CD14-positive monocyte (primary cell): ENCODE measurements at regions of chr7 and their contacts with region 1.

Region 1: DNA sequence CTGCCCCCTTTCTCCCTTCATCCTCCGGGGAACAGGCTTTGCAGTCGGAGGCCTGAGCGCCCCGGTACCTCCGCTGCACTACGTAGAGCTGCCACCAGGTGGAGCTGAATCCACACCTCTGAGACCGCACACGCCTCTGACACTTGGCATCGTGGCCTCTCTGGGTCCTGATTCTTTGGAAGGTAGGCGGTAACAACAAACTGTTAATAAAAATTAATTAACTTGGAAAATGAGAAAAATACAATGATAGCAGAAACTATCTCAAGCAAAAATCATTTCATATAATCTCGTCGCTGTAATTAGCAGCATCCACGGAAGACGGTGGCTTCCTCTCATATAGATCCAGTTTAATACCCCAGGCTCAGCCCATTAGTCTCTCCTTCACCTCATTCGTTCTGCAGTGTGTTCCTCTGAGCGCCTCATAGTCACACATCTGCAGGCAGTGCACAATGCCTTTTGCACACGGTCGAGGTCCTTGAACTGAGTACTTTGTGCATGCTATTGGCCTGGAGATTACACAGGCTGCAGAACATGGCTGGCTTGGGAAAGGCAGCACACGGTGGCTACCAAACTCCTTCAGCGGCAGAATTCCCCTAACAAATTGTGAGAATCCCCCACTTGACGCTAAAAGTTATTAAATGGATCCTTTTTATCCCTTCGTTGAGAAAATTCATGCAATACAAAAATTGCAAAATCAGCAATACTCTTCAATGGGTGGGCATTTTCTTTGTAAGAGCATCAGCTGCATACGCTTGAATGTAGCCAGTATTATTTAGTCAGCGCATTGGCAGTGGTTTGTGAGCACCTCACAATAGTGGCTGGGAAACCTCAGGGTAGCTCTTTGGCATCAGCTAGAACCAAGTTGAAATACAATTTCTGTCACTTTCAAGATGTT is 18.7 kb downstream of the OR9A2 start:
- DNase-seq: peak; percentile 67 to 73 (median 73)
- H3K4me3 ChIP-seq: no peak overlapping the region
- H3K4me3 Mint-ChIP-seq: no peak overlapping the region
- H3K27ac ChIP-seq: no peak overlapping the region
- H3K27ac Mint-ChIP-seq: peak overlapping the region in 1 of 7 donors; percentile 34
- H3K4me1 ChIP-seq: peaks cover 0 to 5% of the 10 kb centered on the region in 2 donors
- H3K4me1 Mint-ChIP-seq: peaks cover 9% of the 10 kb centered on the region
- H3K27me3 ChIP-seq: no peaks in the 10 kb centered on the region
- H3K27me3 Mint-ChIP-seq: peaks cover 3 to 7% (median 5%) of the 10 kb centered on the region in 3 donors
- CTCF ChIP-seq: peak; percentile 93

Region 2: GRCh38 chr7:142853739-142854371 is 154.4 kb before region 1 on chr7:
- intact Hi-C with region 1: loop called (anchors 5 to 10 kb)
- DNase-seq: peak; percentile 77 to 81 (median 78)
- H3K4me3 ChIP-seq: peak overlapping the region; percentile 77 to 96 (median 87)
- H3K4me3 Mint-ChIP-seq: peak overlapping the region; percentile 95 to 97
- H3K27ac ChIP-seq: peak overlapping the region; percentile 82 to 84
- H3K27ac Mint-ChIP-seq: peak overlapping the region; percentile 92 to 97 (median 94)
- H3K4me1 ChIP-seq: peaks cover 19 to 31% of the 10 kb centered on the region in 2 donors
- H3K4me1 Mint-ChIP-seq: peaks cover 26% of the 10 kb centered on the region
- H3K27me3 ChIP-seq: no peaks in the 10 kb centered on the region
- H3K27me3 Mint-ChIP-seq: peaks cover 0 to 3% (median 0%) of the 10 kb centered on the region in 3 donors
- CTCF ChIP-seq: peak; percentile 89

Region 3: GRCh38 chr7:142880876-142881505 is 127.3 kb before region 1 on chr7:
- intact Hi-C with region 1: loop called in 1 of 2 experiments (anchors 10 kb)
- DNase-seq: peak; percentile 16 to 44 (median 44)
- H3K4me3 ChIP-seq: no peak overlapping the region
- H3K4me3 Mint-ChIP-seq: no peak overlapping the region
- H3K27ac ChIP-seq: no peak overlapping the region
- H3K27ac Mint-ChIP-seq: no peak overlapping the region
- H3K4me1 ChIP-seq: no peaks in the 10 kb centered on the region
- H3K4me1 Mint-ChIP-seq: no peaks in the 10 kb centered on the region
- H3K27me3 ChIP-seq: no peaks in the 10 kb centered on the region
- H3K27me3 Mint-ChIP-seq: peaks cover 2 to 6% (median 5%) of the 10 kb centered on the region in 3 donors
- CTCF ChIP-seq: peak; percentile 90

Region 4: DNA sequence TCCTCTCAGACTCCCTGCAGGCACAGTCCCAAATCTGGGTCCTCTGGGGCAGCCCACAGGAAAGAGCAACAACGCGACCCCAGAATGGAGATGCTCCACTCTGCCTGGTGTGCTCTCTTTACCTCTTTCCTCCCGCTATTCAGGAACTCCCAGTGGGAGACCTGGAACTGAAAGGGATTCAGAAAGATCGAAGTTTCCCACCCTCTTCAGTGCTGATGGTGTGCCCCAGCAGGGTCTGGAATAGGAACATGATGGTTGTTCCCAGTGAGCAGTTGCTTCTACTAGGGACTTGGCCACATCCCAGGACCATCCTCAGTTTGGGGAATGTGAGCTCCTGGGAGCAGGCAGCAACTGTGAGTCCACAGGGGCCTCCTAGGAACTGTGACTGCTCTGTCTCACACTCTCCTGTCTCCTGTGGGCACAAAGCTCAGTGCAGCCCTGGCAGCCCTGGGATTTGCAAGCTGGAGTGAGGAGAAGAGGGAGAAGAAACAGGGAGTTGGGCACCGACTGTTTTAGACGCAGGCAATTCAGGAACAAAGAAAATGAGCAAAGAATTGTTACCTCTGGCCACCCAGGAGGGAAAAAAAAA is 61.8 kb after region 1 on chr7:
- intact Hi-C with region 1: no loop called
- DNase-seq: no peak
- H3K4me3 ChIP-seq: no peak overlapping the region
- H3K4me3 Mint-ChIP-seq: no peak overlapping the region
- H3K27ac ChIP-seq: no peak overlapping the region
- H3K27ac Mint-ChIP-seq: no peak overlapping the region
- H3K4me1 ChIP-seq: no peaks in the 10 kb centered on the region
- H3K4me1 Mint-ChIP-seq: no peaks in the 10 kb centered on the region
- H3K27me3 ChIP-seq: no peaks in the 10 kb centered on the region
- H3K27me3 Mint-ChIP-seq: peaks cover 2 to 3% (median 2%) of the 10 kb centered on the region in 3 donors
- CTCF ChIP-seq: no peak

Region 5: DNA sequence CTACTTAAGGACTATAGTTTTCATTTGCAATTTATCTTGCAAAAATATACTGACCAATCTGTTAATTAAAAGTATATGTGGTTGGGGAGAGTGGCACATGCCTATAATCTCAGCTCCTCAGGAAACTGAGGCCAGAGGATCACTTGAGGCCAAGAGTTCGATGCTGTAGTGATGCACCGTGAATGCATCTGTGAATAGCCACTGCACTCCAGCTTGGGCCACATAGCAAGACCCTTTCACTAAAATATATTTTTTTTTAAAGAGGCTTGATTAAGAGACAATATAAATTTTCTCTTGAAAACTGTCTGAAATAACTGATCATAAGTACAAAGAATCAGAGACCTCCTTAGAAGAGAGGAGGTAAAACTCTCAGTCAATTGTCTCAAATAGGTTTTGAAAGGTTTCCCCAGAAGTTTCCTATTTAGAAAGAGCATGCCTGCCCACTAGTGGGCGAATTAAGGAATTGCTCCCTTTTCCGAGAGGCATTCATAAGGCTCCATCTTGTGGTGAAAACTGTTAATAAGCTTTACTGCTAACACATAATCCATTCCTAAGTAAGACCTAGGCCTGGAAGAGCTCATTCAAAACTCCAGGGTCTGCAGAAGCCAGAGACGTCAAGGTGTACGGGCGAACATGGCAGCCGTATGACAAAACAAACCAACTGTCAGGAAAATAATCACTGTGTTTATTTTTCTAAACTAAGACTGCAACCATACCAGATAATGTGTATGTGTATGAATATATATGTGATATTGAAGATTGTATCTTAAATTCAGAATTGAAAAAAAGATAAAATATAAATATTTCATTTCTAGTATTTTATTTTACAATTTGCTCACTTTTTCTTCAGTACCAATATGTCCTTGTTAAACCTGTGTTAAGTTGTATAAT is 206.8 kb after region 1 on chr7:
- intact Hi-C with region 1: loop called (anchors 2 kb)
- DNase-seq: peak; percentile 77 to 93 (median 81)
- H3K4me3 ChIP-seq: no peak overlapping the region
- H3K4me3 Mint-ChIP-seq: no peak overlapping the region
- H3K27ac ChIP-seq: no peak overlapping the region
- H3K27ac Mint-ChIP-seq: no peak overlapping the region
- H3K4me1 ChIP-seq: peaks cover under 1 to 2% of the 10 kb centered on the region in 2 donors
- H3K4me1 Mint-ChIP-seq: peaks cover 19% of the 10 kb centered on the region
- H3K27me3 ChIP-seq: no peaks in the 10 kb centered on the region
- H3K27me3 Mint-ChIP-seq: peaks cover 0 to 3% (median 2%) of the 10 kb centered on the region in 3 donors
- CTCF ChIP-seq: peak; percentile 100

Region 6: DNA sequence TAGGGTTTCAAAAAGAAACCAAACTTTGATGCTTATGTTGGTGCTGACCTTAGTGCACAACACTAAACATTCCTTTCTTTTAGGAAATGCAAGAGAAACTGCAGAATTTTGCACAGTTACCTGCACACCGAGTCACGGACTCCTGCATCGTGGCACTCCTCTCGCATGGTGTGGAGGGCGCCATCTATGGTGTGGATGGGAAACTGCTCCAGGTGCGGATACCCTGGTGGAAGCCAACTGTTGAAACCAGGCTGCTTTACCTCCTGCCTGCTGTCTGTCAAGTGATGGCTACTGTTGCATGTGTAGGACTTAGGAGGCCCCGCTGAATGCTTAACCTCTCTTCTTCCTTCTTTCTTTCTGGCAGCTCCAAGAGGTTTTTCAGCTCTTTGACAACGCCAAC is 291.6 kb after region 1 on chr7:
- intact Hi-C with region 1: loop called in 1 of 2 experiments (anchors 5 kb)
- DNase-seq: no peak
- H3K4me3 ChIP-seq: peak overlapping the region in 1 of 3 experiments; percentile 40
- H3K4me3 Mint-ChIP-seq: no peak overlapping the region
- H3K27ac ChIP-seq: peak overlapping the region; percentile 31 to 79
- H3K27ac Mint-ChIP-seq: peak overlapping the region; percentile 76 to 88 (median 84)
- H3K4me1 ChIP-seq: peaks cover 45 to 60% of the 10 kb centered on the region in 2 donors
- H3K4me1 Mint-ChIP-seq: peaks cover 58% of the 10 kb centered on the region
- H3K27me3 ChIP-seq: no peaks in the 10 kb centered on the region
- H3K27me3 Mint-ChIP-seq: no peaks in the 10 kb centered on the region
- CTCF ChIP-seq: peak; percentile 47